Activated naive CD4-positive, alpha-beta T cell treated with anti-CD3 and anti-CD28 coated beads for 36 hours (primary cell): ENCODE measurements at regions of chr12 and their contacts with region 1.

Region 1: GRCh38 chr12:27014085-27014858 is at the start of gene TM7SF3:
- DNase-seq: peak; percentile 96
- H3K4me3 Mint-ChIP-seq: peak within 1 kb of the TSS; percentile 91
- H3K27ac Mint-ChIP-seq: peak within 1 kb of the TSS; percentile 88
- H3K4me1 Mint-ChIP-seq: peaks cover 45% of the 10 kb centered on the region
- H3K27me3 Mint-ChIP-seq: no peaks in the 10 kb centered on the region
- total RNA-seq, gene TM7SF3: 39.1 to 42.8 TPM

Region 2: DNA sequence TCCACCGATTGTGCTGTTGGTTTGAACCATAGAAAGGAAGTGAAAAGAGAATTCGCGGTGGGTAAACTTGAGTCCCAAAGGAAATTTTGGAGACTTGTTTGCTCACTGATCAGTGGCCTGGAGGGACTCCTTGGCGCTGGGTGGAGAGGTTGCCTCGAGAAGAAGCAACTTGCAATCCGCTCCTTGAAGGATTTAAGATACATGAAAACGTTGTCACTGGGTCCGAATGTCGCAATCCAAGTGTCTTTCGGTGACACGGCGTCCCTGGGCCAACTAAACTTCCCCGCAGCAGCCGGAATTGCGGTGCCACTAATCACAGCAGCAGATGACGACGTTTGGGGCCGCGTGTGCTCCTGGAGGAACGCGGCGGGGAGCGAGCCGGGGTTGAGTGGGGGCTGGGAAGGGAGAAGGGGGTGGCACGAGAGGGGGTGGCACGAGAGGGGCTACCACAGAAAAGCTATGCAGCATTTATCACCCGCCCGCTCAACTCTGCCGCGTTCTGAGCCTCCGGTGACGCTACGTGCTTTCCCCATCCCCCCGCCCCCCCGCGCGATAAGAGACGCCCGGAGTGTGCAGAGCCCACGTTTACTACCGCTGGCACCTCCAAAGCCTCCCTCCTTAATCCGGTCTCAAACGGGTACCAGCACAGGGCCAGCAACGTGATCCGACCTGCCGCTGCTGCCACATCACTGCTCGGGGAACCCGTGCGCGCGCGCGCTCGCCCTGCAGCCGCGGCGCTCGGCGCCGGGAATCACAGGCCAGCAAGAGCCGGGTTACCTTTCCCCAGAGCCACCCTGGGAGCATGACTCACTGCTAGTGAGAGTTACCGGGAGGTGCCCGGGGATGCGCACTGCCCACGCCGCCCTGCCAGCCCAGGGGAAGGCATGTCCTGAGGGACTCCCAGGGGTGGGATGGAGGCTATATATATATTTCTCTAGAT is 888.6 kb before region 1 on chr12:
- CTCF ChIA-PET with region 1: no interaction called
- intact Hi-C with region 1: loop called (anchors 2 kb)
- DNase-seq: peak; percentile 53
- H3K4me3 Mint-ChIP-seq: peak overlapping the region; percentile 82
- H3K27ac Mint-ChIP-seq: no peak overlapping the region
- H3K4me1 Mint-ChIP-seq: peaks cover 23% of the 10 kb centered on the region
- H3K27me3 Mint-ChIP-seq: peaks cover 69% of the 10 kb centered on the region

Region 3: GRCh38 chr12:26832822-26833742 is 181.2 kb before region 1 on chr12 and contains the start of gene ITPR2:
- CTCF ChIA-PET with region 1: interaction called, 3 read pairs
- intact Hi-C with region 1: loop called (anchors 1 kb)
- DNase-seq: peak; percentile 95
- H3K4me3 Mint-ChIP-seq: peak within 1 kb of the TSS; percentile 99
- H3K27ac Mint-ChIP-seq: peak within 1 kb of the TSS; percentile 97
- H3K4me1 Mint-ChIP-seq: peaks cover 30% of the 10 kb centered on the region
- H3K27me3 Mint-ChIP-seq: no peaks in the 10 kb centered on the region
- total RNA-seq, gene ITPR2: 24.4 to 24.5 TPM

Region 4: DNA sequence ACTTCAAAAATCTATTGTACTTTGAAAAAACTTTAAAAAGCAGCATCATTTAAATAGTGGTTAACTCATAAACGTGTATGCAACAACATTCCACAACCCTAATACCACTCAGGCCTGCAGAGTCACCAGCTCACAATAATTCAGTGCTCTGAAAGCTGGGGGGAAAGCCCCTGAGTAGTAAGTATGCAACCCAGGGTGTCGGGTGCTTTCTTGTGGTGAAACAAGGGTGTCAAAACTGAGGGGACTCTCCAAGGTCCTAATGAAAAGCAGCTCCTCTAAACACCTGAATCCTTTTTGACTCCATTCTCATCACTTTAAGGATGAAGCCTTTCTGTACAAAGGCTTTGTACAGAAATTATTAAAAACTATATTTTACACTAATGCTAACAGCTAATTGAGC is 42.3 kb before region 1 on chr12:
- CTCF ChIA-PET with region 1: interaction called, 5 read pairs
- intact Hi-C with region 1: loop called (anchors 1 kb)
- DNase-seq: peak; percentile 92
- H3K4me3 Mint-ChIP-seq: no peak overlapping the region
- H3K27ac Mint-ChIP-seq: no peak overlapping the region
- H3K4me1 Mint-ChIP-seq: peaks cover 9% of the 10 kb centered on the region
- H3K27me3 Mint-ChIP-seq: no peaks in the 10 kb centered on the region

Region 5: DNA sequence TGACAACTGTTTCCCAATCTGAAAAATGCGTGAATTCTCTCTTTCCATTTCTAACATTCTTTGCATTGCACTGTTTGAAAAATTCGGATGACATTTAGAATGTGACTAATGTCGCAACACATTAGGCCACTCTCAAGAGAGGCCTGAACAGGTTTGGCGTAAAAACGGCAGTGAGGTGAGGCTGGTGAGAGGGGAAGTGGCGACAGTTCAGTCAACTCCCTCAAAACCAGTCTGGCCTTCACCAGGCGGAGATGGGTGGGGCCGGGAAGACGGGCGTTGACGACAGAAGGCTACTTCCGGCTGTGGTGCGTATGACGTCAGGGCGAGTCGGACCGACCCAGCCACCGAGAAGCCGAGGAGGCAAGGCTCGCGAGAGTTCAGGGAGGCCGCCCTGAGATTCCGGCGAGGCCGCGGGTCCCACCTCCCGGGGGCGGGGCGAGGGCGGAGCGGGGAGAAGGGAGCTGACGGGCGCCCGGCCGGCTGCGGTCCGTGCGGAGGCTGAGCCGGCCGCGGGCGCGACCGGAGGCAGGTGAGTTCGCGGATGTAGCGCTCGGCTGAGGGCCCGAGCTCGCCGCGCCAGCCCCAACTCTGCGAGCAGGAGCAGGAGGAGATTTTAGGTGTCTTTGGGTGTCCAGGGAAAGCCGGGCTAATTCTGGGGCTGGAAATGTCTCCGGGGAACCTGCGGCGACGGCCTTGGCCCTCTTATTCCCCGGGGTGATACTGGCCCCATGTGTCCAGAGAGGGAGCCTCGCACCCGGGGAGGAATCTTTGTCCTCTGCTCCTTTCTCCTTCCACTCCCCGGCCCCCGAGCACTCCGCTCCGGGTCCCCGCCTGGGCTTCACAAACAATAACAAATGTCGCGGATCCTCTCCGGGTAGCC is 229.8 kb after region 1 on chr12 and contains the start of gene STK38L:
- CTCF ChIA-PET with region 1: interaction called, 6 read pairs
- intact Hi-C with region 1: loop called (anchors 1 kb)
- DNase-seq: peak; percentile 98
- H3K4me3 Mint-ChIP-seq: peak within 1 kb of the TSS; percentile 98
- H3K27ac Mint-ChIP-seq: peak within 1 kb of the TSS; percentile 91
- H3K4me1 Mint-ChIP-seq: peaks cover 47% of the 10 kb centered on the region
- H3K27me3 Mint-ChIP-seq: no peaks in the 10 kb centered on the region
- total RNA-seq, gene STK38L: 21.3 to 21.4 TPM

Region 6: DNA sequence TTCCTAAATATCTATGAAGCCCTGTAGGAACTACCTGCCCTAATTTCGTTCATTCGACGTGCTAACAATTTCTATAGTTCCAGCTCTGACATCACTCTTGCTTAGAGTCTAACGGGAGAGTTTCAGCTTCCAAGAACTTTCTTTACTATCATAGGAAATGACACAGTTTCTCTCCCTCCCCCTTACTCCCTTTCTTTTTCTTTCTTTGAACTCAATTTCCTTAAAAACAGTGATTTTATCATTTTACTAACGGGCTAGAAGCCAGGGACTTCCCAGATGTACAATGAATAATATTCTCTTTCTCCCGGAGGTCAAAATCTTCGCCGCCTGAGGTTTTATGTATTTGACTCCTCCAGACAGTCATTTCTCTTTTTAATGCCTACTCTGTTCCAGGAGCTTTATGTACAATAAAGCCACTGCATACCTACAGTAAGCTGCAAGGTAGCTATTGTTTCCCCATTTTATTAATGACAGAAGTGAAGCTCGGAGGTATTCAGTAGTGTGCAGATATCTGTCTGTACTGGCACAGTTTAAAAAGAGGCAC is 448.0 kb after region 1 on chr12:
- CTCF ChIA-PET with region 1: no interaction called
- intact Hi-C with region 1: loop called (anchors 1 kb)
- DNase-seq: peak; percentile 59
- H3K4me3 Mint-ChIP-seq: no peak overlapping the region
- H3K27ac Mint-ChIP-seq: peak overlapping the region; percentile 72
- H3K4me1 Mint-ChIP-seq: peaks cover 58% of the 10 kb centered on the region
- H3K27me3 Mint-ChIP-seq: no peaks in the 10 kb centered on the region